OCI-LY7 (cell line): ENCODE measurements at regions of chr19 and their contacts with region 1.

Region 1: DNA sequence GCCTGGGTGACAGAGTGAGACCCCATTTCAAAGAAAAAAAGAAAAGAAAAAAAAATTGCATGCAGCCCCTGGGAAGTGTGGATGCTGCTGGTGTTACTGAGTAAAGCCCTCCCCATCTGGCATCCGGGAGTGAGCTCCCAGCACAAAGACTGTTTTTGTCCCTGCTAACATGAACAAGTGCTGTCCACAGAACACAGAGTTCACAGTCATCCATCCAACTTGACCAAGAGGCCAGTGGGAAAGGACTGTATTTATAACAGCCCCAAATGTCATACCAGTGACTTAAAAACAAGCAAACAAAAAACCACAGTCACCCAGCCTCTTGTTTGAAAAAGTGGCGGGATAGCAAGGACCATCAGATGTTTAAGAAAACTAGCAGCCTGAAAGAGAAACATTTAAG is 10.8 kb downstream of the FBXO17 start:
- DNase-seq: no peak
- H3K4me3 ChIP-seq: no peak overlapping the region
- H3K27ac ChIP-seq: no peak overlapping the region
- H3K4me1 ChIP-seq: no peaks in the 10 kb centered on the region
- CTCF ChIP-seq: no peak

Region 2: DNA sequence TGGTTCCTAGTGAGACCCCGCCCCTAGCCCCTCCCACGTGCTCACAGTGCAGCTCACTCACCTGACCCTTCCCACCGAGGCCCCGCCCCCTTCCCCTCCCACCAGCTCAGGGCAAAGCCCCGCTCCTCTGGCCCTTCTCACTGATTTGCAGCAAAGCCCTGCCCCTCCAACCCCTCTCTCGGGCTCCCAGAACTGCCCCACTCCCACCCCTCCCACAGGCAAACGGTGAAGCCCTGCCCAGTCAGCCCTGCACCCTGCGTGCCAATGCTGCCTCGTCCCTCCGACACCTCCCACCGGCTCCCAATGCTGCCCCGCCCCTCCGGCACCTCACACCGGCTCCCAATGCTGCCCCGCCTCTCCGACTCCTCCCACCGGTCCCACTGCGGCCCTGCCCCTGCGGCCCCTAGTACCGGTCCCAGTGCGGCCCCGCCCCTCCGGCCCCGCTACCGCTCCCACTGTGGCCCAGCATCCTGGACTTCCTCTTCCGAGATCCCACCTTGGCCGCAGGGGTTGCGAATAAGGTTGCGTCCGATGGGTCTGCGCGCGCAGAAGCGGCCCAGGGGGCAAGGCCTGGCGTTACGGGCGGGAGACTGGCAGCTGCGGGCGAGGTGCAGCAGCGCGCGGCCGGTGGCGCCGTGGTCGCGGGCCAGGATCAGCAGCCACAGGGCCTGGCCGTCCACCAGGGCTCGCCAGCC is 66.8 kb after region 1 on chr19:
- CTCF ChIA-PET with region 1: no interaction called
- POLR2A ChIA-PET with region 1: no interaction called
- intact Hi-C with region 1: loop called (anchors 10 kb)
- DNase-seq: peak; percentile 93
- H3K4me3 ChIP-seq: peak overlapping the region; percentile 67
- H3K27ac ChIP-seq: no peak overlapping the region
- H3K4me1 ChIP-seq: peaks cover 12% of the 10 kb centered on the region
- CTCF ChIP-seq: no peak